ENCODE measurements at regions of chr6 and their contacts with region 1.

Region 1: GRCh38 chr6:56757588-56757984 is 114.9 kb upstream of the DST start:
- DNase-seq: no peak
- ATAC-seq: peak; percentile 52
- H3K4me3 ChIP-seq: no peak overlapping the region
- H3K27ac ChIP-seq: peak overlapping the region; percentile 54
- H3K4me1 ChIP-seq: peaks cover 76% of the 10 kb centered on the region
- H3K27me3 ChIP-seq: no peaks in the 10 kb centered on the region
- CTCF ChIP-seq: peak; percentile 42 to 49 (median 43); a peak in 5 of 6 replicates
- EP300 ChIP-seq: no peak
- POLR2A ChIP-seq: no peak
- RAD21 ChIP-seq: peak; percentile 75

Region 2: DNA sequence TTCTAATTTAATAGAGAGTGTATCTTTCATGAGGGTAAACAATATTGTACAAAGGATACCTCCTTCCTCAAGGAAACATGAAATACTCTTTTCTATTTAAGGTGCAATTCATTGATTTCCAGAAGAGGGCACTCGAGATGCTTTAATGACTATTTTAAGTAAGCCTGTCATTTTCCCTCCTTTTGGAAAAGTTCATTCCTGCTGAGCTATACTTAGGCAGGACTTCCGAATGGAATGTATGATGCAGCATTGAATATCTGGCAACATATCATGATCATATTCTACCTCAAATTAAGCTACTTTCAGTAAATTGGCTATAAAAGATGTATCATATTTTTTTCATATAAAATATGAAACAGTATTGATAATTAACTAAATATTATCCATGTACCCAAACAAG is 119.9 kb before region 1 on chr6:
- CTCF ChIA-PET with region 1: interaction called, 29 read pairs
- POLR2A ChIA-PET with region 1: no interaction called
- RAD21 ChIA-PET with region 1: no interaction called
- SMC1A ChIA-PET with region 1: interaction called, 6 read pairs
- in situ Hi-C with region 1: no loop called
- intact Hi-C with region 1: loop called (anchors 5 kb)
- DNase-seq: peak; percentile 7
- ATAC-seq: peak; percentile 52; the same call in 2 of the 3 replicates
- H3K4me3 ChIP-seq: no peak overlapping the region
- H3K27ac ChIP-seq: no peak overlapping the region
- H3K4me1 ChIP-seq: no peaks in the 10 kb centered on the region
- H3K27me3 ChIP-seq: no peaks in the 10 kb centered on the region
- CTCF ChIP-seq: peak; percentile 51 to 59 (median 55); a peak in 5 of 6 replicates
- EP300 ChIP-seq: no peak
- POLR2A ChIP-seq: no peak
- RAD21 ChIP-seq: peak; percentile 74

Region 3: GRCh38 chr6:56714982-56715456 is 42.6 kb before region 1 on chr6:
- CTCF ChIA-PET with region 1: interaction called, 260 read pairs
- POLR2A ChIA-PET with region 1: interaction called, 5 read pairs
- RAD21 ChIA-PET with region 1: interaction called, 181 read pairs
- SMC1A ChIA-PET with region 1: interaction called, 396 read pairs
- in situ Hi-C with region 1: no loop called
- intact Hi-C with region 1: no loop called
- DNase-seq: no peak
- ATAC-seq: no peak
- H3K4me3 ChIP-seq: no peak overlapping the region
- H3K27ac ChIP-seq: no peak overlapping the region
- H3K4me1 ChIP-seq: peaks cover 18% of the 10 kb centered on the region
- H3K27me3 ChIP-seq: no peaks in the 10 kb centered on the region
- CTCF ChIP-seq: no peak
- EP300 ChIP-seq: no peak
- POLR2A ChIP-seq: no peak
- RAD21 ChIP-seq: no peak

Region 4: GRCh38 chr6:56724455-56724854 is 33.1 kb before region 1 on chr6:
- CTCF ChIA-PET with region 1: interaction called, 11 read pairs
- POLR2A ChIA-PET with region 1: interaction called, 4 read pairs
- RAD21 ChIA-PET with region 1: interaction called, 4 read pairs
- SMC1A ChIA-PET with region 1: interaction called, 396 read pairs
- in situ Hi-C with region 1: no loop called
- intact Hi-C with region 1: no loop called
- DNase-seq: no peak
- ATAC-seq: no peak
- H3K4me3 ChIP-seq: no peak overlapping the region
- H3K27ac ChIP-seq: no peak overlapping the region
- H3K4me1 ChIP-seq: peaks cover 7% of the 10 kb centered on the region
- H3K27me3 ChIP-seq: no peaks in the 10 kb centered on the region
- CTCF ChIP-seq: no peak
- EP300 ChIP-seq: no peak
- POLR2A ChIP-seq: no peak
- RAD21 ChIP-seq: no peak

Region 5: DNA sequence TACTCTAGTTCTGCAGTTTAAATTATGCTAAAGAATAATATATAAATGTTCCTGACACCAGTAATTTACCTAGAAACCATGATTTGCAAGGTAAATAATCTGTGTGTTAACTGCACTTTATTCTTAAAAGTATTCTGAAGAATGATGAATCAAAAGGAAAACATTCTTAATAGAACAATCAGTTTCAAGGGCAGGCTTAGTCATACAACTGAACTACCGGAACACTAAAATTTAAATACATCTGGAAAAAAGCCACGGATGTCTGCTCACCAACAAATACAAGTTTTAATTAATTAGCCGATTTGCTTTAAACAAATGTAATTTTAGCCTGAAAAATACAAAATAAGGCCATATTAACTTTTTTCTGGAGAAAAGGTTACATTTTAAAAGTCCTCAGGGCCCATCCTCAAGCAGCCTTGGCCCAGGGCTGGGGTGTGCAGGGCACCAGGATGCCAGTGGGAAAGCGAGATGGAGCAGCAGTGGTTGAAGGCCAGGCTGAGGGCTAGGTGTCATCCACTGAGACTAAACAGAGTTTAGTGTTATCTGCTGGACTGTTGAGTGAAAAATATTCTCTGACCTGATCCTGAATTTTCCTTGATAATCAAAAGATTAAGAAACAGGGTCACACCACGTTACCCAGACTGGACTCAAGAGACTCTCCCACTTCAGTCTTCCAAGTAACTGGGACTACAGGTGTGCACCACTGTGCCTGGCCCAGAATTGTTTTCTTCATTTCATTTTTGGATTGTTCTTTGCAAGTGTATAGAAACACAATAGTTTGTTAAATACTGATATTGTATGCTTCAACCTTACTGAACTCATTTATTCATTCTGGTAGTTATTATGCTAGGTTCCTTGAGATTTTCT is 26.7 kb before region 1 on chr6:
- CTCF ChIA-PET with region 1: interaction called, 15 read pairs
- POLR2A ChIA-PET with region 1: interaction called, 3 read pairs
- RAD21 ChIA-PET with region 1: interaction called, 4 read pairs
- SMC1A ChIA-PET with region 1: interaction called, 11 read pairs
- in situ Hi-C with region 1: no loop called
- intact Hi-C with region 1: no loop called
- DNase-seq: no peak
- ATAC-seq: 0 out of 3 replicates have a peak, but pooled peaks have one; percentile 26
- H3K4me3 ChIP-seq: no peak overlapping the region
- H3K27ac ChIP-seq: no peak overlapping the region
- H3K4me1 ChIP-seq: peaks cover 13% of the 10 kb centered on the region
- H3K27me3 ChIP-seq: no peaks in the 10 kb centered on the region
- CTCF ChIP-seq: no peak
- EP300 ChIP-seq: no peak
- POLR2A ChIP-seq: no peak
- RAD21 ChIP-seq: no peak

Region 6: DNA sequence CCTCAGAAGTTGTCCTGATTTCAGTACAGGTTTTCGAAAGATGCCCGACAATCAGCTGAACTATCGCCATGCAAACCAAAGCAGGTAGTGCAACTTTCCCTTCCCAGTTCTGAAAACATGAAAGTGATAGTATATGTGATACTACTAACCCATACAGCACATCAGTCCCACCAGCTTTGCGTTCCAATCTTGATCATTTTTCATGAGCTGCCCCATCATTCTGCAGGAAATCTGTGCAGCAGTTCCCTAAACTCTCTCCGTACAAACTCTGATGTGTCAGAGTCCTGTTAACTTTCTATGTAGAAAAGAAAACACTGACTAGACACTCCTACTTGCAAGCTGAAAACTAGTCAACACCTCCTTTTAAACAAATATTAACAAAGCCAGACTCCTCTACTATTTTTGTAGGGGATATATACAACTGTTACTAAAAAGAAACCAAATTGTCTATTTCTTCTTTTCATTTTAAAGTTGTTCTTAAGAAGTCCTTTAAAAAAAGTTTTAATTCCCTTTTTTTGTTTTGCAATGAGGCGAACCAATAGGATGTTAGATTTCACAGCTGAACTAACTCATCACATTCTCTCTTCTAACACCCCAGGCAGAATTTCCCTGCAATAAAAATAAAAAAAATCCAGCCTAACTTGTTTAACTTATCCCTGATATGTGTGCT is 15.3 kb before region 1 on chr6:
- CTCF ChIA-PET with region 1: interaction called, 21 read pairs
- POLR2A ChIA-PET with region 1: interaction called, 15 read pairs
- RAD21 ChIA-PET with region 1: interaction called, 48 read pairs
- SMC1A ChIA-PET with region 1: interaction called, 67 read pairs
- in situ Hi-C with region 1: no loop called
- intact Hi-C with region 1: no loop called
- DNase-seq: no peak
- ATAC-seq: peak; percentile 83
- H3K4me3 ChIP-seq: peak overlapping the region; percentile 17; the same call in 1 of the 2 replicates
- H3K27ac ChIP-seq: peak overlapping the region; percentile 50
- H3K4me1 ChIP-seq: peaks cover 20% of the 10 kb centered on the region
- H3K27me3 ChIP-seq: no peaks in the 10 kb centered on the region
- CTCF ChIP-seq: no peak
- EP300 ChIP-seq: no peak
- POLR2A ChIP-seq: no peak
- RAD21 ChIP-seq: no peak